Heart left ventricle (tissue), 16 donors: ENCODE measurements at regions of chr7 and their contacts with region 1.

Region 1: DNA sequence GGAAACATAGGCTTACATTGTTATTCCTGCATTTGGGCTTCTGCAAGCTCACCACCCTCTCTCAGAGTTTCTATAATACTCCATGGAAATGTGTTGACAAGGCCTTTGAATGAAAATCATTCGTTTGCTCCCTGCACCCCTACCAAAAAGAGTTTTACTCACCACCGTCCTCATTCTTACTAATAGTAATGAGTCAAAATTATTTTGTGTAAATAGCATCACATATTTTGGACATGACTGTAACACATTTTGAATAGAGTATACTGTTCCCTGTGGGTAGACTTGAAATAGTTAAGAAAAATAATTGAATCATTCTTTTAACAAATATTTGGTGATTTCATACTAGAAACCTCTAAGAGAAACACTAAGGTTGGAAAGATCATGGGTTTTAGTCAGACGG is 84.6 kb downstream of the AKAP9 start:
- DNase-seq: no peak
- ATAC-seq: no peak
- H3K4me3 ChIP-seq: no peak overlapping the region
- H3K27ac ChIP-seq: no peak overlapping the region
- H3K4me1 ChIP-seq: no peaks in the 10 kb centered on the region
- H3K27me3 ChIP-seq: no peaks in the 10 kb centered on the region
- CTCF ChIP-seq: no peak
- POLR2A ChIP-seq: no peak

Region 2: GRCh38 chr7:91527460-91527859 is 497.8 kb before region 1 on chr7:
- intact Hi-C with region 1: no loop called
- DNase-seq: no peak
- ATAC-seq: no peak
- H3K4me3 ChIP-seq: no peak overlapping the region
- H3K27ac ChIP-seq: no peak overlapping the region
- H3K4me1 ChIP-seq: no peaks in the 10 kb centered on the region
- H3K27me3 ChIP-seq: no peaks in the 10 kb centered on the region
- CTCF ChIP-seq: no peak
- POLR2A ChIP-seq: no peak

Region 3: DNA sequence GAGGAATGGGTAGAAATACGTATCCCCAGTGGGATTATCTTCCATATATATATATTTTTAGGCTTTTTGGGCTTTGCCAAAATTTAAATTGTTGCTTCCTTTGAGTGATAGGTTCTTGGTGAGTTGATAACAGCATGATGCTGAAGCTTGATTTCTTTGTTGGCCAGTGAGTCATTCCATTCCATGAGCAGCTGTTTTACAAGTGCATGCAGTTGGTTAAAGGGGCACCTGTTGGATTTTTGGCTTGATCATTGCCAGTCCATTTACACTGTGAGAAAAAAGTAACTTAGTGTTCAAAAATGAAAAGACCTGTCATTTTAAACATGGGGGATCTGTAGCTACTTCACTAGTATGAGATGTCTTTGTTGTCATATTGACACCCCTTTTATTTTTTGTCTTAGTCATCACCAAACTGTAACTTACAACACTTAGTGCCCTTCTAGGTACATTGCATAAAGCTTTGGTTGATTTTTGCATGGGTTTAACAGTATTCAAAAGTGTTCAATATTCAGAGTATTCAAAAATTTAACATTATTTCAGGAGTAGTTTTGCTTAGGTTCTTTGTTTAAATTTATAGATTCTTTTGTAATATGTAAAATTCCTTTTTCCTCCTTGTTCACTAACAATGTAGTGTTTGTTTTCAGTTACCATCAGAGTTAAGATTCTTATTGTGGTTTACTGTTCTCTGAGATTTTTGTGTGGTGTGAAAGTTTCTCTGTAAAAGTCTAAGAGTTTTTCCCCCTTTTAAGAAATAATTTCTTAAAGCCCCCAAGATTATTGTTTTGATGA is 75.8 kb before region 1 on chr7:
- intact Hi-C with region 1: no loop called
- DNase-seq: no peak
- ATAC-seq: no peak
- H3K4me3 ChIP-seq: no peak overlapping the region
- H3K27ac ChIP-seq: no peak overlapping the region
- H3K4me1 ChIP-seq: peaks cover 0 to 18% (median 6%) of the 10 kb centered on the region in 12 donors
- H3K27me3 ChIP-seq: no peaks in the 10 kb centered on the region
- CTCF ChIP-seq: no peak
- POLR2A ChIP-seq: no peak

Region 4: GRCh38 chr7:91961816-91962215 is 63.4 kb before region 1 on chr7:
- intact Hi-C with region 1: no loop called
- DNase-seq: no peak
- ATAC-seq: no peak
- H3K4me3 ChIP-seq: no peak overlapping the region
- H3K27ac ChIP-seq: no peak overlapping the region
- H3K4me1 ChIP-seq: peaks cover 0 to 30% (median 12%) of the 10 kb centered on the region in 12 donors
- H3K27me3 ChIP-seq: no peaks in the 10 kb centered on the region
- CTCF ChIP-seq: no peak
- POLR2A ChIP-seq: no peak

Region 5: GRCh38 chr7:92075434-92076158 is 50.3 kb after region 1 on chr7:
- intact Hi-C with region 1: loop called in 1 of 10 experiments (anchors 10 kb)
- DNase-seq: no peak
- ATAC-seq: no peak
- H3K4me3 ChIP-seq: no peak overlapping the region
- H3K27ac ChIP-seq: no peak overlapping the region
- H3K4me1 ChIP-seq: no peaks in the 10 kb centered on the region
- H3K27me3 ChIP-seq: no peaks in the 10 kb centered on the region
- CTCF ChIP-seq: no peak
- POLR2A ChIP-seq: no peak

Region 6: DNA sequence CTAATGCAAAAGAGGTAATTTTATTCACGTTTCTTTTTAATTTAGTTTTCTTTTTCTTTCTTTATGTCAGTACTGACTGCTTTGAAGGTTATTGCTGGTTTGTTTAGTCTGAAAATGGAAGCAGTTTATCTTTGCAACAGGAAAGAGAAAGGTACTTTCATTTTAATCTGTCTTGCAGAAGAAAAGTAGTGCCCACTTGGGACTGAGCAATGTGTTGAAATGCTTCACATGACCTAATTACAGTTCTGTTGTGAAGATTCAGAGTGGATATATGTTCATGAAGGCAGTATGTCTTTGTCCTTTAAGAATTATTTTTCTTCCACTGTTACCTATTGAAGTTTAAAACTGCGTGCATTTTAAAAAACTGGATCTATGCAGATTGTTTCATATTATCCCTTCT is 300.6 kb after region 1 on chr7:
- intact Hi-C with region 1: no loop called
- DNase-seq: no peak
- ATAC-seq: no peak
- H3K4me3 ChIP-seq: no peak overlapping the region
- H3K27ac ChIP-seq: no peak overlapping the region
- H3K4me1 ChIP-seq: peaks cover 0 to 13% (median 2%) of the 10 kb centered on the region in 12 donors
- H3K27me3 ChIP-seq: no peaks in the 10 kb centered on the region
- CTCF ChIP-seq: no peak
- POLR2A ChIP-seq: no peak